ENCODE measurements at regions of chr4 and their contacts with region 1.

Region 1: GRCh38 chr4:177309522-177310371 is at the start of gene NEIL3:
- DNase-seq: peak; percentile 97
- H3K4me3 Mint-ChIP-seq: peak within 1 kb of the TSS; percentile 92
- H3K27ac Mint-ChIP-seq: peak within 1 kb of the TSS; percentile 93
- H3K4me1 Mint-ChIP-seq: peaks cover 54% of the 10 kb centered on the region
- H3K27me3 Mint-ChIP-seq: no peaks in the 10 kb centered on the region
- total RNA-seq, gene NEIL3: 29.3 to 30.3 TPM

Region 2: DNA sequence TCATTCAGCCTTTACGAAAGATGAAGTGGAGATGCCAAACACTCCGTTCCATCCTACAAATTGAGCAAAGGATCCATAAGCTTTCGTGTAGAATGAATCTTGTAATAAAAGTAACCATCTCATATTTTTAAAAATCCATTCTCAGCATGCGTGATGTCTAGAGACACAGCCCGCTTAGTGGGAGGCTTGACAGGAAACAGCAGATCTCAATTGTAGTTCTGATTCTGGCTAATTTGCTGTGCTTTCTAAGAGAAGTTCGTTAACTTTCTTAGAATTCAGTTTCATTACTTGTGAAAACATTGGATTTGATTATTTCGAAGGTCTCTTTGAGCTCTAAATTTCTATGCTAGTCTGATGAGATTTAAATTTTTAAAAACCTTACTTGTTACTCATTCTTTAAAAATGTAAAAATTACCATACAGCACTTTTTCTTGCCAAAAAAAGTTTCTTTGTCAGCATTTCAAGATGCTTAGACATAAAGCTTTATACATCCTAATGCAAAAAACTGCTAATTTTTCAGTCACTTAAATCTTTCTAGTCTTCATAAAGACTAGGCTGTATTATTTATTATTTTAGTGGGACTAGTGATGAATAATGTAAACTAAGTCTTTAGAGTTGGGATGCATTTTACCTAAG is 67.0 kb before region 1 on chr4:
- CTCF ChIA-PET with region 1: interaction called, 3 read pairs
- POLR2A ChIA-PET with region 1: interaction called, 15 read pairs
- DNase-seq: no peak
- H3K4me3 Mint-ChIP-seq: no peak overlapping the region
- H3K27ac Mint-ChIP-seq: peak overlapping the region; percentile 29
- H3K4me1 Mint-ChIP-seq: peaks cover 15% of the 10 kb centered on the region
- H3K27me3 Mint-ChIP-seq: peaks cover 3% of the 10 kb centered on the region

Region 3: DNA sequence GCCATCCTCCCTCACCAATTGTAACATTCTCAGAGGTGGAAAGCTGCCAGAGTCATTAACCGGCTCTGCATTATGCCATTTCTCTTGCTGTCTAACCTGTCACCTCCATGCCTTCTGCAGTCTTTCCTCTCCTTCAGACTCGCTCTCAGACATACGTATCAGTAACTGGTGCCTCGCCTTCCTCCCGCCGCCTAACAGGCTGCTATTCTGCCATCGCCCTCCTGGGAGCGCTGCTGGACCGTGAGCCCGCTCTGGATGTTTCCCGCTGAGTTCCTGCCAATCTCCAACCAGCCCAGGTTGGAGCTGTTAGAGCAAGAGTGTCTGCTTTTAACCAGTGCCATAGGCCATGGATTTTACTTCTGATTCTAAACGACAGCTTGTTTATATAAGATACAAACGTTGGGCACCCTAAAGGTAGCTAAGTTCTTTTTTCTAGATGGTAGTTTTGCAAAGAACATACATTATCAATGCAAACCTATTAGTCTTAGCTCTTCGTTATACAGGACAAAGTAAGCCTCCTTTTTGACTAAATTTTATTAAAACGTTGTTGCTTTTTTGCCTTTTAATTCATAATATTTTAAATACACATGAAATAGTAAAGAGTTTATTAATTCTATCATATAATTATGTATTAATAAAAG is 59.6 kb before region 1 on chr4:
- CTCF ChIA-PET with region 1: interaction called, 16 read pairs
- POLR2A ChIA-PET with region 1: interaction called, 17 read pairs
- DNase-seq: peak; percentile 80
- H3K4me3 Mint-ChIP-seq: no peak overlapping the region
- H3K27ac Mint-ChIP-seq: no peak overlapping the region
- H3K4me1 Mint-ChIP-seq: peaks cover 11% of the 10 kb centered on the region
- H3K27me3 Mint-ChIP-seq: peaks cover 8% of the 10 kb centered on the region

Region 4: DNA sequence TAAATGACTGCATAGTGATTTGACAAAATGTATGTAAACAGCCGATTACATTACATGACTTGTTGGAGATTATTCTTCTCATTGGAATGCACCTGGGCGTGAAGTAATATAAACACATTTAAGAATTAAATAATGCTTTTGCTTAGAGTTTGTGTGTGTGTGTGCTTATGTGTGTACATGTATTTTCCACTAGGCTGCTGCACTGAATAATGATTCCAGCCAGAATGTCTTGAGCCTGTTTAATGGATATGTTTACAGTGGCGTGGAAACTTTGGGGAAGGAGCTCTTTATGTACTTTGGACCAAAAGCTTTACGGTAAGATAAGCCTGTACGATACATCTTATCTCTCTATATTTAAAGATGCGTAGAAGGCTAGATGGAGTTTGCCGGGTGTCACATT is 12.5 kb after region 1 on chr4:
- CTCF ChIA-PET with region 1: interaction called, 4 read pairs
- POLR2A ChIA-PET with region 1: interaction called, 42 read pairs
- DNase-seq: no peak
- H3K4me3 Mint-ChIP-seq: no peak overlapping the region
- H3K27ac Mint-ChIP-seq: no peak overlapping the region
- H3K4me1 Mint-ChIP-seq: peaks cover 59% of the 10 kb centered on the region
- H3K27me3 Mint-ChIP-seq: no peaks in the 10 kb centered on the region

Region 5: DNA sequence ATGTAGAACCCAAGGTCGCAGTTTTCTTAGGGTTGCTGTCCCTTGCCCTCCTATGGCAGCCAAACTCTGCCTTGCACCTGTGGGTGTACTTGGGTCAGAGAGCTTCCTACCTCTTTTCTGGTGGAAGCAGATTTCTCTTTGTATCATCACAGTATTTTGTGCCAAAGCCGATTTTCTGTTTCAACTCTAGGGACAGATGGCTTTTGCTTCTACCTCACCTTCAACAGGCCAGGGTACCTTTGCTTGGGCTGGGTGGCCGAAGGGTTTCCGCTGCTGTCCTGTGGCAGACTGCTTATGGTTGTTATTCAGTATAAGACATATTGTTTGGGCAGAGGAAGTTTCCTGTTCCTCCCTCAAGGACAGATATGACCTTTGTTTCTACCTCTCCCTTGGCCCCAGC is 22.4 kb after region 1 on chr4:
- CTCF ChIA-PET with region 1: no interaction called
- POLR2A ChIA-PET with region 1: interaction called, 10 read pairs
- DNase-seq: no peak
- H3K4me3 Mint-ChIP-seq: no peak overlapping the region
- H3K27ac Mint-ChIP-seq: no peak overlapping the region
- H3K4me1 Mint-ChIP-seq: peaks cover 24% of the 10 kb centered on the region
- H3K27me3 Mint-ChIP-seq: no peaks in the 10 kb centered on the region

Region 6: GRCh38 chr4:177339477-177340374 is 30.0 kb after region 1 on chr4:
- CTCF ChIA-PET with region 1: interaction called, 11 read pairs
- POLR2A ChIA-PET with region 1: interaction called, 8 read pairs
- DNase-seq: no peak
- H3K4me3 Mint-ChIP-seq: no peak overlapping the region
- H3K27ac Mint-ChIP-seq: peak overlapping the region; percentile 47
- H3K4me1 Mint-ChIP-seq: peaks cover 12% of the 10 kb centered on the region
- H3K27me3 Mint-ChIP-seq: no peaks in the 10 kb centered on the region

Measured in activated CD4-positive, alpha-beta memory T cell treated with anti-CD3 and anti-CD28 coated beads, Interleukin-2, amount 10 ng/mL, durations not matched to agents 7 days and 5 days (primary cell).